ENCODE measurements at regions of chr9 and their contacts with region 1.

Region 1: DNA sequence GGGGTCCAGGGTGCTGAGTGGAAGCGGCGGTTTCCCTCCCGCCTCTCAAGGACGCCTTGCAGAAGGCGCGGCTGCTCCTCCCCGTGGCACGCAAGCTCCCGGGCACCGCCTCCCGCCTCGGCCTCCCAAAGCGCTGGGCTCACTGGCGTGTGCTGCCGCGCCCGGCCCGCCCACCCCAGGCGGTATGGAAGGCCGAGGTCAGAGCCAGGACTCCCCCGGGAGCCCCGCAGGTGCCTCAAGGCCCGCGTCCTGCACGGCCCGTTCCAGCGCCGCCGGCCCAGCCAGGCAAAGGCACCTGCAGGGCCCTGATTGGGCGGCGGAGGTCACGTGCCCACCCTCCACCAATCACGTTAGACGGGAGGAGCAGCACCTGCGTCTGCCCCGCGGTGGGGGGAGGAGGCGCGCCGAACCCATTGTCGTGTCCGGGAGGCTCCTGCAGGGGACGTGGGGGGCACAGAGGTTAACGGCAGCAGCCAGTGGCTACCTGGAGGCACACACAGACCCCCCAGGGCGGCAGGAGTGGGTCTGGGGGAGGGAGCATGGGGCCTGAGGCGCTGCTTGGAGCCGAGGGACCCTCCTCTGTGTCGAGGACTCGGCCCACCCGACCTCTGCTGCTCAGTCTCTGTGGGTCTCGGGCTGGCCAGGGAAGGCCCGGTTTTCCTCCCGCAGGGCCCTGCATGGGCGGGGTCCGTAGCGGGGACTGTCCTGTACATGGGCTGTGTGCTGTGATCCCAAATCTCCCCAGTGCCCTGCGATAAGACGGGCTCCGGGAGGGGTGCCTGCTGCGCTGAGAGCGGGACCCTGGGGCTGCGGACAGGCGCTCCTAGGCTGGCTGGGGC is 2.0 kb upstream of the LCN12 start:
- DNase-seq: peak; percentile 98

Region 2: GRCh38 chr9:136539427-136540421 is 410.3 kb before region 1 on chr9:
- intact Hi-C with region 1: no loop called
- DNase-seq: peak; percentile 99

Region 3: DNA sequence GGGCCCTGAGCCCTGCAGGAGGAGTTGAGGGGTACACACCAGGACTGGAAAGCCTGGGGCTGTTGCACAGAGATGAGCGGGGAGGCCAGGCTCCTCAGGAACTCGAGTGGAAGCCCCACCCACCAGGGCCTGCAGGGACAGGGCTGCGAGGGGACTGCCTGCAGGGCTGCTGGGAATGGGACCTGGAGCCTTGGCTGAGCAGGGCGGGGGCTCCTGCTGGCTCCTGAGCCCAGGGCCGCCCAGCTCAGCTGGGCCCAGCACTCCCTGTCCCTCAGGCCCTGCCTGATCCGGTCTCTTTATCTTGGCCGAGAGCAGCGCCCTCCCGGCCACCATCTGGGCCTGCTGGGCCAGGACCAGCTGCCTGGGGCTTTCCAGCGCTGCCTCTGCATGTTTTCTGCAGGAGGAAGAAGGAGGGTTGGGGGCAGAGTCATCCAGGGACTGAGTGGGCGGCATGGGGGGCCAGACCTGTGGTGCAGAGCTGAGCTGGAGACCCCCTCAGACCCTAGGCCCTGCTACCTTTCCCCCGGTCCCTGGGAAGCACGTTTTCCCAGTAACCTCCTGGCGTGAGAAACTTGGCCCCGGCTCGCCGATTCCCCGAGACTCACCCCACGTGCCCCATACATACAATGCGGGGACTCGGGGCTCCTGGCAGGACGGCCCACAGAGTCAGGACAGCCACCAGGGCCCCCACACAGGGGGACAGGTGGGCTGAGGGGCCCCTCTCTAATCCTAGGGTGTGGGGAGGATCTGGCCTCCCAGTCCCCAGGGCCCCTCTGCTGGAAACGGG is 11.4 kb after region 1 on chr9:
- intact Hi-C with region 1: no loop called
- DNase-seq: no peak

Region 4: DNA sequence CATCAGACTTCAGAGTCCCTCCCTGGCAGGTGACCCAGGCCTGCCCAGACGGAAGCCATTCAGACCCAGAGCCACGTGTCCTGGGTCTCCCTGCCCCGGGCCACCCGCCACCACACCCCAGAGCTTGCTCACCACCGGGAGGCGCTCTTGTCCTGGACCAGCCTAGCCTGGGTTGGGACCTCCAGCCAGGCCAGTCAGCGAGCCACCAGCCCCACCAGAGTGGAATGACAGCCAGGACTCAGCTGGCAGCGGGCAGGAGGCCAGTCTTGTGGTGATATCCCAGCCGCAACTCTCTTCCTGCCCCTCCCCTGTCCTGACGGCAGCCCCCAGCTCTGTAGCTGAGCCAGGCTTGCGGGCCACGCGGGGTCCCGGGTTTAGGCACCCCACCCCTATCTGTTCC is 25.6 kb after region 1 on chr9:
- intact Hi-C with region 1: loop called (anchors 2 kb)
- DNase-seq: no peak

Region 5: DNA sequence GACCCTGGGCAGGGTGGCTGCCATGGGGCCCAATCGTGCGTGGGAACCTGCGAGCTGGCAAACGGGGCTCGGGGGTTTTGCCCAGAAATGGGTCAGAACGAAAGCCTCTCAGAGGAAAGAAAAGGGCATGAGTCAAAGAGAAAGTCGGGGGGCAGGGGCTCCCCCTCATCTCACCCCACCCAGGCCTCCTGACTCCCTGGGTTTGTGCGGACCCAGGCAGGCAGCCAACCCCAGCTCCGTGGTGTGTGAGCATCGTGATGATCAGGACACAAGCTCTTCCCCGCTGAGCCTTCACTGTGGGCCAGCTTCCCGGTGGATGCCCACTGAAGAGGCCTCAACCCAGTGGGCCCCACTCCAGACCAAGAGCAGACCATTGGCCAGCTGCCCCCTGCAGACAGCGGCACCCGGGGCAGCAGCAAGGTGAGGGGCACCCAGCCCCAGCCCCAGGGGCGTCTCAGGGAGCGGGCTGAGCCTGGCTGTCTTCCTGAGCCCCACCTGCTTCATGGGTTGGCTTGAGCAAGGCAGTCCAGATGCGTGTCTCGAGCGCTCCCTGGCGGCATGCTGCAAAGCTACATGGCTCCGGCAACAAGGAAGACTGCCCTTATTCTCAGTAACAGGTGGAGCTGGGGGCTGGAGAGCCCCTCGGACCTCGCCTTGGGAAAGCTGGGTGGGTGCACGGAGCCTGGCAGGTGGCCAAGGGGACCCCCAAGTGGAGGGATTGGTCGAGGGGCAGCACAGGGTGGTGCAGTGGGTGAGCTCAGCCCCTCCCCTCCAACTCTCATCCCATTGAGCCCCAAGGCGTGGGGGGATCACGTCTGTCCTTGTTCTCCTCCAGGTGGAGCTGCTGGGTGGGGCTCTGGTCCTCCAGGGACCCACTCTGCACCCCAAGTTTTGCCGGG is 85.1 kb after region 1 on chr9:
- intact Hi-C with region 1: loop called (anchors 2 kb)
- DNase-seq: peak; percentile 93